Activated CD8-positive, alpha-beta T cell treated with anti-CD3 and anti-CD28 coated beads for 36 hours (primary cell): ENCODE measurements at regions of chr13 and their contacts with region 1.

Region 1: GRCh38 chr13:99228737-99229691 is 28.4 kb downstream of the UBAC2 start:
- DNase-seq: peak; percentile 31
- ATAC-seq: peak; percentile 64
- H3K4me3 Mint-ChIP-seq: peak overlapping the region; percentile 70
- H3K27ac Mint-ChIP-seq: peak overlapping the region; percentile 92
- H3K4me1 Mint-ChIP-seq: peaks cover 77% of the 10 kb centered on the region
- H3K27me3 Mint-ChIP-seq: no peaks in the 10 kb centered on the region
- CTCF ChIP-seq: no peak

Region 2: GRCh38 chr13:99133230-99133629 is 95.8 kb before region 1 on chr13:
- CTCF ChIA-PET with region 1: no interaction called
- POLR2A ChIA-PET with region 1: no interaction called
- intact Hi-C with region 1: no loop called
- DNase-seq: no peak
- ATAC-seq: no peak
- H3K4me3 Mint-ChIP-seq: no peak overlapping the region
- H3K27ac Mint-ChIP-seq: no peak overlapping the region
- H3K4me1 Mint-ChIP-seq: no peaks in the 10 kb centered on the region
- H3K27me3 Mint-ChIP-seq: no peaks in the 10 kb centered on the region
- CTCF ChIP-seq: no peak

Region 3: DNA sequence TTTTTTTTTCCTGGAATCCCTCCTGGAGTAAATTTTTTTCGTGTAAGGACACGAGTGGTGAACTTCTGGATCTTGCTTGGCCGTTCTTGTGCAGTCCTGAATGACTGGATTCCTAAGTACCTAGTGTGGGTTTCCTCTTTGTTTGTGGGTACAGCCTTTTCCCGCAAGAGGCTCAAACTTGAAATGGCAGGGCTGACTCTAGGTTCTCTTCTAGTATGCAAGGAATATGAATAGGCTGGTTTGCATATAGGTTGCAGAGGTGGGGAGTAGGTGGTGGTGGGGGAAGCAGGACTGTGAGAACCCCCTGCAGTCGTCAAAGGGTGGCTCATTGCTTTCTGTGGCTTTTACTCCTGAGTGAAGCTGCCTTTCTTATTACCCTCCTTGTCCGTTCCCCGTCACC is 14.8 kb before region 1 on chr13:
- CTCF ChIA-PET with region 1: interaction called, 4 read pairs
- POLR2A ChIA-PET with region 1: interaction called, 18 read pairs
- intact Hi-C with region 1: loop called (anchors 2 kb)
- DNase-seq: peak; percentile 84
- ATAC-seq: peak; percentile 72
- H3K4me3 Mint-ChIP-seq: peak overlapping the region; percentile 74
- H3K27ac Mint-ChIP-seq: peak overlapping the region; percentile 91
- H3K4me1 Mint-ChIP-seq: peaks cover 80% of the 10 kb centered on the region
- H3K27me3 Mint-ChIP-seq: no peaks in the 10 kb centered on the region
- CTCF ChIP-seq: no peak

Region 4: GRCh38 chr13:99246100-99246499 is 17.1 kb after region 1 on chr13:
- CTCF ChIA-PET with region 1: interaction called, 10 read pairs
- POLR2A ChIA-PET with region 1: interaction called, 3 read pairs
- intact Hi-C with region 1: no loop called
- DNase-seq: no peak
- ATAC-seq: no peak
- H3K4me3 Mint-ChIP-seq: no peak overlapping the region
- H3K27ac Mint-ChIP-seq: no peak overlapping the region
- H3K4me1 Mint-ChIP-seq: peaks cover 29% of the 10 kb centered on the region
- H3K27me3 Mint-ChIP-seq: no peaks in the 10 kb centered on the region
- CTCF ChIP-seq: no peak

Region 5: GRCh38 chr13:99258210-99258860 is 29.3 kb after region 1 on chr13 and contains the start of gene GPR18:
- CTCF ChIA-PET with region 1: interaction called, 13 read pairs
- POLR2A ChIA-PET with region 1: interaction called, 4 read pairs
- intact Hi-C with region 1: no loop called
- DNase-seq: peak; percentile 66
- ATAC-seq: peak; percentile 74
- H3K4me3 Mint-ChIP-seq: peak within 1 kb of the TSS; percentile 84
- H3K27ac Mint-ChIP-seq: peak within 1 kb of the TSS; percentile 98
- H3K4me1 Mint-ChIP-seq: peaks cover 66% of the 10 kb centered on the region
- H3K27me3 Mint-ChIP-seq: no peaks in the 10 kb centered on the region
- CTCF ChIP-seq: no peak
- total RNA-seq, gene GPR18: 11.4 to 11.6 TPM

Region 6: DNA sequence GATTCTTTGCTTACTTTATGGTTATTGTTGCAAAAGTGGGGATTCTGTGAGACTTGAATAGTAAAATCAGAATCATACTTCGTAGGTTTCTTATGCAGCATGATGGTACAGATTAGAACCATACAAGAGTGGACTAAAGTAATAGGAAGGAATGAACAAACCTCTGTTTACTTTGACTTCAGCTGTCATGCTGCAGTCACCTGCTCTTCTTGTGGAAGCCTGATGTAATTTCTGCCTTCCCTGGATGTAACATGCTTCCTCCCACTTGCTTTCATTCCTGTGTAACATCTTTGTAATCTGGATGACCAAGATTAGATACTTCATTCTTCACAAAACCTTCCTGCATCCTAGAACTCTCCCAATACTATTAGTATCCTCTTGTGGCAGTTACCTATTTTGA is 1094.9 kb after region 1 on chr13:
- CTCF ChIA-PET with region 1: no interaction called
- POLR2A ChIA-PET with region 1: no interaction called
- intact Hi-C with region 1: no loop called
- DNase-seq: no peak
- ATAC-seq: no peak
- H3K4me3 Mint-ChIP-seq: no peak overlapping the region
- H3K27ac Mint-ChIP-seq: no peak overlapping the region
- H3K4me1 Mint-ChIP-seq: no peaks in the 10 kb centered on the region
- H3K27me3 Mint-ChIP-seq: no peaks in the 10 kb centered on the region
- CTCF ChIP-seq: no peak